Posterior vena cava (tissue), 2 donors: ENCODE measurements at regions of chr4 and their contacts with region 1.

Region 1: GRCh38 chr4:159016593-159017024 is 86.3 kb upstream of the RAPGEF2 start:
- DNase-seq: no peak

Region 2: GRCh38 chr4:158895797-158896576 is 120.6 kb before region 1 on chr4:
- intact Hi-C with region 1: loop called in 1 of 2 experiments (anchors 10 kb)
- DNase-seq: no peak

Region 3: GRCh38 chr4:158996669-158997074 is 19.9 kb before region 1 on chr4:
- intact Hi-C with region 1: no loop called
- DNase-seq: no peak